ENCODE measurements at regions of chr5 and their contacts with region 1.

Region 1: DNA sequence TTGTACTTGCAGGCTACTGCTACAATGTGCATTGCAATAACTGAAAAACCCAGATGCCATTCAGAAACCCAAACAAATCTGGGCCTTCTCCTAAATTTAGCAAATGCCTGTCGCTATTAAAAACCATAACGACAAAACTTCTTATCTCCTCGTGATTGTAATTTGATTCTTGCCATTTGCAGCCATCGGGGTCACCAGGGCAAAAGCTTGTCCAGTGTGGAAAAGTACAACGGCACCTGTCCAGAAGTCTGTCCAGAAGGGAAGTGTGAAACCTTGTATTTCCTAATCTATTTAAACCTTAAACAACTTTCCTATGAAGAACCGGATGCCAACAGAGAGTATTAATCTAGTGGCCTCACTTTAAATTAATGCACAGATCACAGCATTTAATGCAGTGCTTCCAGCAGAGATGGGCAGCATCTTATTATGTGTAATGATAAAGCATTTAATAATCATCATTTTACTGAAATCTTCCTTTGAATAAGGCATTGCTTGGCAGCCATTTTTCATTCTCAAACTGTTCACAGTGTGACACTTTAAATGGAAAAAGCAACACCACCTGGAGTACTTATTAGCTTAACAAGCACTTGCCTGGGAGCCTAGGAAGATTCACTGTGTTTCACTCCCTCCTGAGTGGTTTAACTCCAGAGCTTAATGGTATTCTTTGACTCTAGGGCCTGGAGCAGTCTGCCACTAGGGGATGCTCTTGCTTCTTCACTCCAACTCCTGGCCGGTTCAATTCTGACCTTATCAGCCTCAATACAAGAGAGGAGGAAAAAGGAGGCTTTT is 4.9 kb upstream of the C7 start:
- DNase-seq: peak; percentile 81
- H3K4me3 Mint-ChIP-seq: no peak overlapping the region
- H3K27ac Mint-ChIP-seq: no peak overlapping the region
- H3K4me1 Mint-ChIP-seq: peaks cover 10% of the 10 kb centered on the region
- H3K27me3 Mint-ChIP-seq: no peaks in the 10 kb centered on the region
- CTCF ChIP-seq: peak; percentile 90

Region 2: GRCh38 chr5:40834849-40835787 is 69.3 kb before region 1 on chr5 and contains the start of gene RPL37:
- CTCF ChIA-PET with region 1: no interaction called
- POLR2A ChIA-PET with region 1: no interaction called
- intact Hi-C with region 1: no loop called
- DNase-seq: peak; percentile 97
- H3K4me3 Mint-ChIP-seq: peak within 1 kb of the TSS; percentile 98
- H3K27ac Mint-ChIP-seq: peak within 1 kb of the TSS; percentile 98
- H3K4me1 Mint-ChIP-seq: peaks cover 17% of the 10 kb centered on the region
- H3K27me3 Mint-ChIP-seq: no peaks in the 10 kb centered on the region
- CTCF ChIP-seq: no peak
- total RNA-seq, gene RPL37: 2,063 and 2,180 TPM in 2 replicates

Region 3: GRCh38 chr5:40914835-40915234 is 10.4 kb after region 1 on chr5:
- CTCF ChIA-PET with region 1: interaction called, 12 read pairs
- POLR2A ChIA-PET with region 1: no interaction called
- intact Hi-C with region 1: no loop called
- DNase-seq: peak; percentile 28
- H3K4me3 Mint-ChIP-seq: no peak overlapping the region
- H3K27ac Mint-ChIP-seq: no peak overlapping the region
- H3K4me1 Mint-ChIP-seq: peaks cover 5% of the 10 kb centered on the region
- H3K27me3 Mint-ChIP-seq: no peaks in the 10 kb centered on the region
- CTCF ChIP-seq: no peak

Region 4: GRCh38 chr5:41270423-41271251 is 366.2 kb after region 1 on chr5:
- CTCF ChIA-PET with region 1: interaction called, 18 read pairs
- POLR2A ChIA-PET with region 1: interaction called, 4 read pairs
- intact Hi-C with region 1: loop called (anchors 1 kb)
- DNase-seq: peak; percentile 69
- H3K4me3 Mint-ChIP-seq: no peak overlapping the region
- H3K27ac Mint-ChIP-seq: no peak overlapping the region
- H3K4me1 Mint-ChIP-seq: no peaks in the 10 kb centered on the region
- H3K27me3 Mint-ChIP-seq: peaks cover 18% of the 10 kb centered on the region
- CTCF ChIP-seq: peak; percentile 60

Region 5: DNA sequence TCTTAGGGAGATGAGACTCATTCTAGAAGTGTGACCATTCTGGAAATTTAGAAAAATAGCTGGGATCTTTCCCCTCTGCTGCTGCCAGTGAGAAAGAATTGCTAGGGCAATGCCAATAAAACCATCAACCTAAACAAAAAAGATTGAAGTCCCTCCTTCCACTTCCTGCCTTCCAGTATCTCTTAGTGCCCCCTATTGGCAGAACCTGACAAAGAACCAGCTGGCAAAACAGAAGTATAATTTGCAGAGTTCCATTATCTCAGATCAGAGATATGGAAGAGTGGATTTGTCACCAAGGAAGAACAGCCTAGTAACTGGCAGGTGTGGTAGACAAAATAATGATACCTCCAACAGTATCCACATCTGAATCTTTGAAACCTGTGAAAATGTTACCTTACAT is 619.8 kb after region 1 on chr5:
- CTCF ChIA-PET with region 1: interaction called, 24 read pairs
- POLR2A ChIA-PET with region 1: no interaction called
- intact Hi-C with region 1: loop called (anchors 1 kb)
- DNase-seq: peak; percentile 24
- H3K4me3 Mint-ChIP-seq: no peak overlapping the region
- H3K27ac Mint-ChIP-seq: no peak overlapping the region
- H3K4me1 Mint-ChIP-seq: peaks cover 13% of the 10 kb centered on the region
- H3K27me3 Mint-ChIP-seq: peaks cover 34% of the 10 kb centered on the region
- CTCF ChIP-seq: no peak

Region 6: DNA sequence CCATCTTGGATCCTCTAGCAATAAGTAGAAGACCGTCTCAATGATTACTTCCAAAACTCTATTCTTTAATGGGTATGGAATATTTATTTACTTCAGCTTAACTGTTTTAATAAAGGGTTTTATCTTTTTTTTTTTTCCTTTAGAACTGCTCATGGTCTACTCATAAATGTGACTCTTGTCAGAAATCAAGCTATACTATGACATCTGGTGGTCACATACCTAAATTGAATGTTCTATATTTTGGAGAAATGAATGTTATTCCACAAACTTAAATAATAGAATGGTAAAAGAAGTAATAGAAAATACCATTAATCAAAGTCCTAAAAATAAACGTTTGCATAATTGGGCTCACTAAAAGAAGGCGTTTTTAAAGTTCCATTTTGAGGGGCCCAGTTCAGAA is 737.2 kb after region 1 on chr5:
- CTCF ChIA-PET with region 1: interaction called, 43 read pairs
- POLR2A ChIA-PET with region 1: no interaction called
- intact Hi-C with region 1: loop called (anchors 1 kb)
- DNase-seq: peak; percentile 9
- H3K4me3 Mint-ChIP-seq: no peak overlapping the region
- H3K27ac Mint-ChIP-seq: no peak overlapping the region
- H3K4me1 Mint-ChIP-seq: no peaks in the 10 kb centered on the region
- H3K27me3 Mint-ChIP-seq: peaks cover 11% of the 10 kb centered on the region
- CTCF ChIP-seq: no peak